Activated naive CD4-positive, alpha-beta T cell treated with anti-CD3 and anti-CD28 coated beads for 36 hours (primary cell): ENCODE measurements at regions of chr4 and their contacts with region 1.

Region 1: DNA sequence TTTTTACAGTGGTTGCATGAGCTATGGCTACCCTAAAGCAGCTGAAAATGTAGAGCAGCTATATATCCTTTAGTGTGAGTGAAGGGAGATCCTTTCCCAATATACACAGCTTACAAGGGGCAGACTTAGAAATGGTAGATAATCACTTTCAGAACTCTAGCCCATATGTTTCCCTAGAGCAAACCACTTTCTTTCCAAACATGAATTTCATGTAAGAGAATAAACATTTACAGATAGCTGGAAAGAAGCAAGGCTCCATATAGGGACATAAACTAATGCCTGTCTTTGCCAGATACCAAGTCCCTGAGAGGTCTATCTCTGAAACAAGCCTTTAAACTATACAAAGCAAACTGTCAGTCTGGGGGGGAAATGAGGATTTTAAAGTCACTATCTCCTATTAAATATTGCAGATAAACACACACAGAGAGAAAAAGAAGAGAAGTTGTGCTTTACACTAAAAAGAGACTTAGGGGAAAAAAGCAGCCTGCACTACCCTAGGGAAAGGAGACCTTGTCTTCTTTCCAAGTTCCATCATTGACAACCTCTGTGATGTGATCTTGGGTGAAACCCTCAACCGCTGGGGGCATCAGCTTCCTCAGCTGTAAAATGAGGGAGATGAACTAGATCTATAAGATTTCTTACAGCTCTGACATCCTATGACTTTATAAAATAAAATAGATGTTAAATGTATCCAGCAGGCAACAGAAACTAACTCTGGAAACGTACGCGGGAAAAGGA is 73.6 kb downstream of the TMEM156 start:
- DNase-seq: no peak
- H3K4me3 Mint-ChIP-seq: no peak overlapping the region
- H3K27ac Mint-ChIP-seq: peak overlapping the region; percentile 73
- H3K4me1 Mint-ChIP-seq: peaks cover 26% of the 10 kb centered on the region
- H3K27me3 Mint-ChIP-seq: no peaks in the 10 kb centered on the region

Region 2: GRCh38 chr4:38939165-38939564 is 19.5 kb before region 1 on chr4:
- CTCF ChIA-PET with region 1: interaction called, 4 read pairs
- intact Hi-C with region 1: loop called (anchors 1 kb)
- DNase-seq: no peak
- H3K4me3 Mint-ChIP-seq: no peak overlapping the region
- H3K27ac Mint-ChIP-seq: peak overlapping the region; percentile 27
- H3K4me1 Mint-ChIP-seq: peaks cover 31% of the 10 kb centered on the region
- H3K27me3 Mint-ChIP-seq: no peaks in the 10 kb centered on the region

Region 3: DNA sequence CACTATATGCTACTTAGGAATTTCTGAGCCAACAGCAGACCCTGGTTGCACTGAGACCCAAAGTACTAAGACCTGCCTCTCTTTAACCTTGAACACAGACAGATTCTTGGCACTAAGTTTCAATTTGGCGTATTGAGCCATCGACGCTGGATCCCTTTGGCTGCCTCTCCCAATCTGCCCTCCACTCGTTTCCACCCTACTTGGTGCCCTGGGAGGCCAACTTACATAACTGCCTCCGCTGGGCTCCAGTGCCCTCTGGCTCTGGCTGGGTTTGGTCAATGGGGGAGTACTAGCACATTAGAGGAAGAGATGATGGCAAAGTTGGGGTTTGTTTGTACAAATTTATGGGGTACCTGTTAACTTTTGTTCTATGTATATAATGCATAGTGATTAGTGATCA is 10.0 kb after region 1 on chr4:
- CTCF ChIA-PET with region 1: interaction called, 4 read pairs
- intact Hi-C with region 1: loop called (anchors 1 kb)
- DNase-seq: no peak
- H3K4me3 Mint-ChIP-seq: no peak overlapping the region
- H3K27ac Mint-ChIP-seq: no peak overlapping the region
- H3K4me1 Mint-ChIP-seq: peaks cover 20% of the 10 kb centered on the region
- H3K27me3 Mint-ChIP-seq: no peaks in the 10 kb centered on the region